ENCODE measurements at regions of chr21 and their contacts with region 1.

Region 1: DNA sequence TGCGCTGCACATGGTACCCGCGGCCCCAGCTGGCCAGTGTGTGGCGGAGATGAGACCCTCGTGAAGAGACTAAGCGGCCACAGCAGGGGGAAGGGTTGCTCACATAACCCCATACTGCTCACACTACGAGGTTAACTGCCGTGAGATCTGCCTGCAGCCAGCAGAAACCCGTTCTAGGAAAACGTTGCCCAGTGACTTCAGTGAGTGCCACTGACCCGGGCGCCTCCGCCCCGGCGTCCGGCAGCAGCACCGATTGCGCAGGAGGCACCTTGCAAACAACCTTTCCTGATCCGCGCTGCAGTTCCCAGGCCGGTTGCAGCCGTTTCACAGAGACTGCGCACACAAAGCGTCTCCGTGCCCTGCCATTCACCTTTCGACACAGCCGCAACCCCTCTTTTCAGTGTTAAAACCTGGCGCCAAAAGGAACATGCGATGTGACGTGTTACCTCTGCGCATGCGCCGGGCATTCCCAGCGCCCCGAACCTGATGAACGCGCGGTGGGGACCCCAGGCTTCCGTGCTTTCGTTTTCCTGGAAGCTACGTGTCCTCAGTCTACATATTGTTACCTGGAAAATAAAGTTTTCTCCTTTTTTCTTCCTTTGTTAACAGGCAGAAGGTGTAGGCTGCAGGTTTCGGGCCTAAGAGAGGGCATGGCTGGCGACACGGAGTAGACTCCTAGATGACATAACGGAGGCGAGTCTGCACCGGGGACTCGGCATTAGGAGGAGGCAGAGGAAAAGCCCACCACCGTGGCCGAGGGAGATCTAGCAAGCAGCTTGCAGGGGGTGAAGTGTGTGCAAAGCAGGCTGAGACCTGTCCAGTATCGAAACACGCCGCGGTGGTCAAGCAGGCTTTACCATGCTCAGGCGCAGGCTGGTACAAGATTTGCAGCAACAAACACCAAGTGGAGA is 8.9 kb downstream of the VPS26C start:
- DNase-seq: peak; percentile 89
- H3K4me3 Mint-ChIP-seq: peak overlapping the region; percentile 80
- H3K27ac Mint-ChIP-seq: peak overlapping the region; percentile 94
- H3K4me1 Mint-ChIP-seq: peaks cover 61% of the 10 kb centered on the region
- H3K27me3 Mint-ChIP-seq: no peaks in the 10 kb centered on the region

Region 2: DNA sequence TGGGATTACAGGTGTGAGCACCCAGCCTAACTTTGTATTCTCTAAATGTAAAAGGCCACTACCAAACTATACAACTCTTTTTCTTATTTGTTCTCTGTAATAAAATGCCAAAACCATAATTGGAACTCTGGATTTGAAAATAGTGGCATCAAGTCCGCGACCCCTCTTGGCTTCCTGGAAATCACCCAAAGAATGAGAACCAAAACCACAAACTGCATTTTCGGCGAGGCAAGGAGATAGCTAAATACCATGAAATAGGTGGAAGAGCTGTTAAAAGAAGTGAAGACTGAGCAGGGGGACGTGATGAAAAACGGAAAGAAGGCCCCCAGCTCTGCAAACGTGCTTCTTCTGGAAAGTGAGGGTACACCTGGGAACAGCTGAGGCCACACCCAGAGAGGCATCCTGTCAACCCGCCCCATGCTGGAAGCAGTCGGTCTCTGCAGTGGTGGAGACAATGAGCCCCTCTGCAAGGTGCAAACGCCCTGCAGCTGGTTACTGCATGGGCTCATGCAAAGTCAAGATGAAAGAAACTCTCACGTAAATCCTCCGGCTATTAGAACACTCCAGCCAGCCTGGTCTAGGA is 13.6 kb before region 1 on chr21:
- CTCF ChIA-PET with region 1: interaction called, 10 read pairs
- POLR2A ChIA-PET with region 1: interaction called, 3 read pairs
- DNase-seq: peak; percentile 30
- H3K4me3 Mint-ChIP-seq: peak overlapping the region; percentile 63
- H3K27ac Mint-ChIP-seq: peak overlapping the region; percentile 88
- H3K4me1 Mint-ChIP-seq: peaks cover 69% of the 10 kb centered on the region
- H3K27me3 Mint-ChIP-seq: no peaks in the 10 kb centered on the region

Region 3: GRCh38 chr21:37452227-37452626 is 194.0 kb after region 1 on chr21:
- CTCF ChIA-PET with region 1: no interaction called
- POLR2A ChIA-PET with region 1: no interaction called
- DNase-seq: no peak
- H3K4me3 Mint-ChIP-seq: no peak overlapping the region
- H3K27ac Mint-ChIP-seq: peak overlapping the region; percentile 37
- H3K4me1 Mint-ChIP-seq: peaks cover 52% of the 10 kb centered on the region
- H3K27me3 Mint-ChIP-seq: no peaks in the 10 kb centered on the region

Measured in activated CD4-positive, alpha-beta T cell treated with anti-CD3 and anti-CD28 coated beads, Interleukin-2, amount 10 ng/mL, durations not matched to agents 7 days and 5 days (primary cell).